HEK293T (cell line): ENCODE measurements at regions of chr12 and their contacts with region 1.

Region 1: DNA sequence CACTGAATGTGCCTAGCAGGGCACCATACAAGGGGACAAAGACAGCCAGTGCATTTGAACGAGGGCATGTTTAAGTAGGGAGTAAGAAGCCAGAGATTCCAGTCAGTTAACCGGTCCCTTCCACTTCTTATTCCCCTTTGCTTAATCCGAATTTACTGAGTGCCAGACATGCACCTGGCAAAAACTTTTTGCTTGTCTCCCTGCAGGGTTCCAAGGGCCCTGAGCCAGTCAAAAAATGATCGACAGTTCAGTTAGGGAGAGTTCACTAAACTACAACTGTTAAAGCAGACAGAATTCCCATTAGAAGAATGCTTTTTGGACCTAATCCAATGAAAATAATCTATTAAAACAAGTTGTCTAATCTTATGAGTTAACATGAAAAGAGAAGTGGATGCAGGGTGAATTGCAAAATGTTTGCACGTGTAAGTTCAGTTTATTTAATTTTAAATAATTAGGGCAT is 193.8 kb downstream of the TMTC2 start:
- DNase-seq: peak; percentile 13

Region 2: DNA sequence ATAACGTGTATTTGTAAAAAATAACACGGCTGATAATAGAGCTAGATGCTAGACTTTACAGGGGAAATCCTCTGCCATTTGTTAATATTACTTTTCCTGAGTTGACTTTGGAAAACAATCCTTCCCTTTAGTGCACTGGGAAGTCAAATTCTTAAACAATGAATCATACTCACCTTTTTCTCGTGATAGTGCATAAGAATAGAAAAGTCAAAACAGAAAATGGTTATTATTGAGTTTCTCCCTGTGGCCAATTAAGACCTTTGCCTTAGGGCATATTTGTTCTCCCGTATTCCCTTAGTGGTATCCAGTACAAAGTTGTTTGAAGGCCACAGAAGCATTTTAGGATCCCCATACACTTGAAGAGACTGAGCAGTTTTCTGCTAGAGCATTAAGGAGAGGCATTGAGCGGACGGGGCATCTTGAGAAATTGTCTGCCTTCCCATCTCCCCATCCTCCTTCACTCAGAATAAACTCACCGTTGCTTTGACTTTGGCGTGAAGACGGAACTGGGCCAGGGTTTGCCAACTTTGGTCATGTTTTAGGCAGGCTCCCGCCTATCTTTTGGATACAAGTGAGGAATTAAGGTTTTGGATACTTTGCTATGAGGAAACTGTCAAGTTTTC is 22.4 kb before region 1 on chr12:
- CTCF ChIA-PET with region 1: interaction called, 17 read pairs
- POLR2A ChIA-PET with region 1: no interaction called
- DNase-seq: no peak

Region 3: GRCh38 chr12:82912406-82912805 is 31.9 kb after region 1 on chr12:
- CTCF ChIA-PET with region 1: no interaction called
- POLR2A ChIA-PET with region 1: no interaction called
- DNase-seq: no peak